Activated naive CD8-positive, alpha-beta T cell treated with anti-CD3 and anti-CD28 coated beads, Interleukin-2, amount 10 ng/mL, durations not matched to agents 7 days and 5 days (primary cell): ENCODE measurements at regions of chr1 and their contacts with region 1.

Region 1: GRCh38 chr1:9892563-9893532 is 17.2 kb downstream of the CTNNBIP1 start:
- DNase-seq: no peak
- ATAC-seq: no peak
- H3K4me3 Mint-ChIP-seq: peak overlapping the region; percentile 5
- H3K27ac Mint-ChIP-seq: no peak overlapping the region
- H3K4me1 Mint-ChIP-seq: peaks cover 20% of the 10 kb centered on the region
- H3K27me3 Mint-ChIP-seq: no peaks in the 10 kb centered on the region

Region 2: GRCh38 chr1:9724706-9725476 is 168.0 kb before region 1 on chr1:
- POLR2A ChIA-PET with region 1: no interaction called
- DNase-seq: peak; percentile 80
- ATAC-seq: peak; percentile 48
- H3K4me3 Mint-ChIP-seq: peak overlapping the region; percentile 1
- H3K27ac Mint-ChIP-seq: peak overlapping the region; percentile 61
- H3K4me1 Mint-ChIP-seq: peaks cover 60% of the 10 kb centered on the region
- H3K27me3 Mint-ChIP-seq: no peaks in the 10 kb centered on the region

Region 3: DNA sequence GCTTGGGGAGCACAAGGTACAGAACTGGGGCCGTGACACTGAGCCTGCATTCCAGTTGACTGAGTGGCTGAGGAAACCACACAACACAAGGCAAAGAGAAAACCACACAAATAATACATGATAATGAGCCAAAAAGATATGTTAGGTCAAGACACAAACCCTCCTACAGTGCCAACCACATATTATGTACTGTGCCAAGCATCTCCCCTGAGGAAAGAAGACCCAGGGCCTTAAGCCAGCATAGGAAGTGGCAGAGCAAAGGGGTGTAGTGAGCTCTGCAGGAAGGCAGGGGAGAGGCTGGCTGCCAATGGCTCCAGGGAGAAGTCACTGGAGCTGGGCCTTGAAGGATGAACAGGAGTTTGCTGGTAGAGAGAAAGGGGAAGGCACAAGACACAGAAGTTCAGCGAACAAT is 11.0 kb before region 1 on chr1:
- POLR2A ChIA-PET with region 1: interaction called, 13 read pairs
- DNase-seq: no peak
- ATAC-seq: peak; percentile 55
- H3K4me3 Mint-ChIP-seq: peak overlapping the region; percentile 65
- H3K27ac Mint-ChIP-seq: peak overlapping the region; percentile 95
- H3K4me1 Mint-ChIP-seq: peaks cover 28% of the 10 kb centered on the region
- H3K27me3 Mint-ChIP-seq: no peaks in the 10 kb centered on the region